ENCODE measurements at regions of chr11 and their contacts with region 1.

Region 1: GRCh38 chr11:17504330-17505107 is 27.9 kb upstream of the ABCC8 start:
- DNase-seq: peak; percentile 74
- H3K4me3 Mint-ChIP-seq: no peak overlapping the region
- H3K27ac Mint-ChIP-seq: no peak overlapping the region
- H3K4me1 Mint-ChIP-seq: no peaks in the 10 kb centered on the region
- H3K27me3 Mint-ChIP-seq: peaks cover 45% of the 10 kb centered on the region
- CTCF ChIP-seq: peak; percentile 89

Region 2: GRCh38 chr11:16945671-16946469 is 558.6 kb before region 1 on chr11:
- CTCF ChIA-PET with region 1: interaction called, 3 read pairs
- POLR2A ChIA-PET with region 1: no interaction called
- intact Hi-C with region 1: loop called (anchors 10 kb)
- DNase-seq: peak; percentile 76
- H3K4me3 Mint-ChIP-seq: no peak overlapping the region
- H3K27ac Mint-ChIP-seq: no peak overlapping the region
- H3K4me1 Mint-ChIP-seq: no peaks in the 10 kb centered on the region
- H3K27me3 Mint-ChIP-seq: no peaks in the 10 kb centered on the region
- CTCF ChIP-seq: peak; percentile 75

Region 3: GRCh38 chr11:17230867-17231851 is 273.4 kb before region 1 on chr11:
- CTCF ChIA-PET with region 1: interaction called, 27 read pairs
- POLR2A ChIA-PET with region 1: no interaction called
- intact Hi-C with region 1: loop called (anchors 1 kb)
- DNase-seq: no peak
- H3K4me3 Mint-ChIP-seq: no peak overlapping the region
- H3K27ac Mint-ChIP-seq: no peak overlapping the region
- H3K4me1 Mint-ChIP-seq: peaks cover 6% of the 10 kb centered on the region
- H3K27me3 Mint-ChIP-seq: no peaks in the 10 kb centered on the region
- CTCF ChIP-seq: no peak

Region 4: GRCh38 chr11:17489751-17490150 is 14.8 kb before region 1 on chr11:
- CTCF ChIA-PET with region 1: interaction called, 41 read pairs
- POLR2A ChIA-PET with region 1: interaction called, 3 read pairs
- intact Hi-C with region 1: no loop called
- DNase-seq: no peak
- H3K4me3 Mint-ChIP-seq: no peak overlapping the region
- H3K27ac Mint-ChIP-seq: no peak overlapping the region
- H3K4me1 Mint-ChIP-seq: no peaks in the 10 kb centered on the region
- H3K27me3 Mint-ChIP-seq: peaks cover 44% of the 10 kb centered on the region
- CTCF ChIP-seq: no peak

Region 5: DNA sequence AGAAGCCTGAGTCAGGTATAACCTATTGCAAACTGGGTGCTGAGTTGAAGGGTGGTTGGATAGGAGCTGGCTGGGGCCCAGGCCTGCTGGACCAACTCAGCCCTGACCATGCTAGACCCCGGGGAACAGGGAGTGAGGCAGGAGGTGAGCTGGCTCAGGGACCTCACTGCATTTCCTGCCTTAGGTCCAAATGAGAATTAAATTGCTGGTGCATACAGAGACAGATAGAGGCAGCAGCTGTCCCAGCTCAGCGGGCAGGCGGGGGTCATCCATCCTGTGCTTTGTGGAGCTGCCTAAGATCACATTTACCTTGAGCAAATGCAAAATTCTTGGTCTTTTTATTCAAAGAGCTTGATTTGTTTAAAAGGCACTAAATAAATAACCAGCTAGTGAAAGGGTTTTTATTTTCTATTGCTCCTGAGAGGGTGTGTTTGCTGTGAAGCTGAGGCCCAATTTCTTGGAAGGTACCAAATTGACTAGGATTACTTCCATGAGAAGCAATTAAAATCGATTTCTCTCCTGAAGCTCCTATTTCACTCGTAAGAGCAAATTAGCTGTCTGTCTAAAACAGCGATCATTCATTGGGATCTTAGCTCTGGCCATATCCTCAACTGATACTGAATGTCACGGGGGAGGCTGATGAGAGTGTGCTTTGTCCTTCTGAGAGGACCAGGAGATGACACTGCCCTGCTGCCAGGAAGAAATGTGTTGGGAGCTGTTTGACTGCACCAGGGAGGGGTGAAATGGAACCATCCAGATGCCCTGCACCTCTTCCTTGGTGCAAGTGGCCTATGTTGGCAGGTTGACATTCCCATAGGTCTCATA is 14.8 kb after region 1 on chr11:
- CTCF ChIA-PET with region 1: interaction called, 98 read pairs
- POLR2A ChIA-PET with region 1: no interaction called
- intact Hi-C with region 1: no loop called
- DNase-seq: no peak
- H3K4me3 Mint-ChIP-seq: no peak overlapping the region
- H3K27ac Mint-ChIP-seq: peak overlapping the region; percentile 47
- H3K4me1 Mint-ChIP-seq: no peaks in the 10 kb centered on the region
- H3K27me3 Mint-ChIP-seq: peaks cover 25% of the 10 kb centered on the region
- CTCF ChIP-seq: no peak

Region 6: DNA sequence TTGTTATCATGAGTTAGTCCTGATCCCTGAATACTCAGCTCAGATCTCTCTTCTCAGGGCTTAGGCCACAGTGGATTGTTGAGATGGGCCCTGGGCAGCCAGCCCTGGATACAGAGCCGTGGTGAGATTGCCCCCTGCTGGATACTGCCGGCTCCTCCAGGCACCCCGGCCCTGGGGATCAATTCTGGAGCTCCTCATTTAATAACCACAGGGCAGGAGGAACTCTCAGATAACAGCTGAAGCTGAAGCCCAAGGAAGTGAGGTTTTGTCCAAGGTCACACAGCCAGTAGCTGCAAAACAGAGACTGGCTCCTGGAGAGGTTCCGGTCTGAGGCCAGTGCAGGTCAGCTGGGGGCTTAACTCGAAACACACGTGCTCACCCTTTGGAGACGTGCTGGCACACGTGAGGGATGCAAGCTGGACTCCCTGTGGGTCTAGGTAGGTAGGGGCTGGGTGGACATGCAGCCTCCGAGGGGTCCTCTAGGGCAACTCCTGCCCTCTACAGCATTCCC is 23.7 kb after region 1 on chr11:
- CTCF ChIA-PET with region 1: interaction called, 98 read pairs
- POLR2A ChIA-PET with region 1: no interaction called
- intact Hi-C with region 1: no loop called
- DNase-seq: peak; percentile 54
- H3K4me3 Mint-ChIP-seq: no peak overlapping the region
- H3K27ac Mint-ChIP-seq: no peak overlapping the region
- H3K4me1 Mint-ChIP-seq: no peaks in the 10 kb centered on the region
- H3K27me3 Mint-ChIP-seq: peaks cover 43% of the 10 kb centered on the region
- CTCF ChIP-seq: peak; percentile 70

Region 7: GRCh38 chr11:17585911-17586695 is 81.6 kb after region 1 on chr11:
- CTCF ChIA-PET with region 1: no interaction called
- POLR2A ChIA-PET with region 1: no interaction called
- intact Hi-C with region 1: no loop called
- DNase-seq: no peak
- H3K4me3 Mint-ChIP-seq: no peak overlapping the region
- H3K27ac Mint-ChIP-seq: no peak overlapping the region
- H3K4me1 Mint-ChIP-seq: no peaks in the 10 kb centered on the region
- H3K27me3 Mint-ChIP-seq: peaks cover 27% of the 10 kb centered on the region
- CTCF ChIP-seq: no peak

Region 8: GRCh38 chr11:17610085-17610894 is 105.8 kb after region 1 on chr11:
- CTCF ChIA-PET with region 1: no interaction called
- POLR2A ChIA-PET with region 1: no interaction called
- intact Hi-C with region 1: no loop called
- DNase-seq: no peak
- H3K4me3 Mint-ChIP-seq: no peak overlapping the region
- H3K27ac Mint-ChIP-seq: no peak overlapping the region
- H3K4me1 Mint-ChIP-seq: no peaks in the 10 kb centered on the region
- H3K27me3 Mint-ChIP-seq: peaks cover 58% of the 10 kb centered on the region
- CTCF ChIP-seq: no peak